ENCODE measurements at regions of chr17 and their contacts with region 1.

Region 1: GRCh38 chr17:29760761-29761696 is 138.3 kb upstream of the CORO6 start:
- DNase-seq: peak; percentile 96
- H3K4me3 Mint-ChIP-seq: peak overlapping the region; percentile 98
- H3K27ac Mint-ChIP-seq: peak overlapping the region; percentile 99
- H3K4me1 Mint-ChIP-seq: peaks cover 28% of the 10 kb centered on the region
- H3K27me3 Mint-ChIP-seq: no peaks in the 10 kb centered on the region

Region 2: GRCh38 chr17:29568331-29569244 is 192.4 kb before region 1 on chr17 and contains the start of gene TP53I13:
- CTCF ChIA-PET with region 1: no interaction called
- POLR2A ChIA-PET with region 1: no interaction called
- intact Hi-C with region 1: loop called (anchors 5 kb)
- DNase-seq: peak; percentile 93
- H3K4me3 Mint-ChIP-seq: peak within 1 kb of the TSS; percentile 86
- H3K27ac Mint-ChIP-seq: peak within 1 kb of the TSS; percentile 94
- H3K4me1 Mint-ChIP-seq: peaks cover 38% of the 10 kb centered on the region
- H3K27me3 Mint-ChIP-seq: no peaks in the 10 kb centered on the region
- total RNA-seq, gene TP53I13: 54.2 to 55.3 TPM

Region 3: GRCh38 chr17:29664743-29665480 is 96.1 kb before region 1 on chr17:
- CTCF ChIA-PET with region 1: no interaction called
- POLR2A ChIA-PET with region 1: interaction called, 12 read pairs
- intact Hi-C with region 1: loop called (anchors 1 kb)
- DNase-seq: no peak
- H3K4me3 Mint-ChIP-seq: no peak overlapping the region
- H3K27ac Mint-ChIP-seq: peak overlapping the region; percentile 84
- H3K4me1 Mint-ChIP-seq: peaks cover 33% of the 10 kb centered on the region
- H3K27me3 Mint-ChIP-seq: no peaks in the 10 kb centered on the region

Region 4: GRCh38 chr17:29705386-29705785 is 55.6 kb before region 1 on chr17:
- CTCF ChIA-PET with region 1: interaction called, 11 read pairs
- POLR2A ChIA-PET with region 1: interaction called, 8 read pairs
- intact Hi-C with region 1: loop called (anchors 1 kb)
- DNase-seq: no peak
- H3K4me3 Mint-ChIP-seq: peak overlapping the region; percentile 61
- H3K27ac Mint-ChIP-seq: peak overlapping the region; percentile 95
- H3K4me1 Mint-ChIP-seq: peaks cover 41% of the 10 kb centered on the region
- H3K27me3 Mint-ChIP-seq: no peaks in the 10 kb centered on the region

Region 5: GRCh38 chr17:29777663-29778062 is 16.6 kb after region 1 on chr17:
- CTCF ChIA-PET with region 1: interaction called, 13 read pairs
- POLR2A ChIA-PET with region 1: interaction called, 4 read pairs
- intact Hi-C with region 1: loop called (anchors 1 kb)
- DNase-seq: no peak
- H3K4me3 Mint-ChIP-seq: no peak overlapping the region
- H3K27ac Mint-ChIP-seq: no peak overlapping the region
- H3K4me1 Mint-ChIP-seq: peaks cover 7% of the 10 kb centered on the region
- H3K27me3 Mint-ChIP-seq: no peaks in the 10 kb centered on the region

Measured in activated CD4-positive, alpha-beta memory T cell treated with anti-CD3 and anti-CD28 coated beads for 36 hours (primary cell).